ENCODE measurements at regions of chr9 and their contacts with region 1.

Region 1: DNA sequence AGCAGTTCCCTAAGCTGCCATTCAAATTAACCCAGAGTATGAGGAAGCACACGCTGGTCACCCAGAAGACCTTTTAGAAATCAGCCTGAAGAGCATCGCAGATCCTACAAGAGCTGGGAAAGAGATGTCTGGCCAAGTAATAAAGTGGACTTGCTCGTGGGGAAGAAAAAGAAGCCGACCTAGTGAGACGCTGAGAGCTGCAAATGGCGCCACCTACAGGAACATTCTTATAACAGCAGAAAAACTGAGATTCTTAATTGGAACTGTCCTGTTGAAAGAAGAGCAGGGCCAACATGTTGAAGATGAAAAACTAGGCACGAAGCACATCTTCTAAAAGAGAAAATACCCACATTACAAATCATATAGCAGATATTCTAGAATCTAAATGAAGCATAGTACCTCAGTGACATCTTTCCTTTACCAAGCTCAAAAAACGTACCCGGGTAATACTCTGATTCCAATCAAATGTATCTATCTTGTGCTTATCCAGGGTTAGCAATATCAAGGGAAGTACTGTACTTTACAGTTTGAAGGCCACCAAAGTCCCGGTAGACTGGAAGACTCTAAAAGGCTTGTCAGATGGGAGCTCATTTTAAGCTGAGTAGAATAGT is 3.9 kb upstream of the GNAQ start:
- DNase-seq: peak; percentile 61 to 75 (median 72)
- H3K4me3 ChIP-seq: no peak overlapping the region
- H3K4me3 Mint-ChIP-seq: peak overlapping the region in 4 of 8 donors; percentile 20 to 62 (median 34)
- H3K27ac ChIP-seq: no peak overlapping the region
- H3K27ac Mint-ChIP-seq: peak overlapping the region; percentile 6 to 91 (median 70)
- H3K4me1 ChIP-seq: peaks cover 34% of the 10 kb centered on the region
- H3K4me1 Mint-ChIP-seq: peaks cover 28 to 39% (median 33%) of the 10 kb centered on the region in 4 donors
- H3K27me3 ChIP-seq: no peaks in the 10 kb centered on the region
- H3K27me3 Mint-ChIP-seq: no peaks in the 10 kb centered on the region

Region 2: GRCh38 chr9:77663754-77664153 is 371.7 kb before region 1 on chr9:
- CTCF ChIA-PET with region 1: no interaction called
- POLR2A ChIA-PET with region 1: no interaction called
- intact Hi-C with region 1: loop called (anchors 10 kb)
- DNase-seq: no peak
- H3K4me3 ChIP-seq: no peak overlapping the region
- H3K4me3 Mint-ChIP-seq: no peak overlapping the region
- H3K27ac ChIP-seq: no peak overlapping the region
- H3K27ac Mint-ChIP-seq: no peak overlapping the region
- H3K4me1 ChIP-seq: no peaks in the 10 kb centered on the region
- H3K4me1 Mint-ChIP-seq: no peaks in the 10 kb centered on the region
- H3K27me3 ChIP-seq: no peaks in the 10 kb centered on the region
- H3K27me3 Mint-ChIP-seq: peaks cover 3 to 5% of the 10 kb centered on the region in 2 donors

Region 3: GRCh38 chr9:77949751-77950436 is 85.6 kb before region 1 on chr9:
- CTCF ChIA-PET with region 1: interaction called, 13 read pairs
- POLR2A ChIA-PET with region 1: no interaction called
- intact Hi-C with region 1: no loop called
- DNase-seq: no peak
- H3K4me3 ChIP-seq: no peak overlapping the region
- H3K4me3 Mint-ChIP-seq: peak overlapping the region in 1 of 8 donors; percentile 10
- H3K27ac ChIP-seq: no peak overlapping the region
- H3K27ac Mint-ChIP-seq: peak overlapping the region in 5 of 7 donors; percentile 13 to 80 (median 33)
- H3K4me1 ChIP-seq: peaks cover 51% of the 10 kb centered on the region
- H3K4me1 Mint-ChIP-seq: peaks cover 58 to 83% (median 67%) of the 10 kb centered on the region in 4 donors
- H3K27me3 ChIP-seq: no peaks in the 10 kb centered on the region
- H3K27me3 Mint-ChIP-seq: no peaks in the 10 kb centered on the region

Region 4: GRCh38 chr9:78004478-78005229 is 30.8 kb before region 1 on chr9:
- CTCF ChIA-PET with region 1: interaction called, 21 read pairs
- POLR2A ChIA-PET with region 1: interaction called, 5 read pairs
- intact Hi-C with region 1: loop called (anchors 2 kb)
- DNase-seq: peak in 2 of 5 donors; percentile 9 to 17
- H3K4me3 ChIP-seq: no peak overlapping the region
- H3K4me3 Mint-ChIP-seq: peak overlapping the region in 2 of 8 donors; percentile 4 to 22
- H3K27ac ChIP-seq: no peak overlapping the region
- H3K27ac Mint-ChIP-seq: peak overlapping the region in 3 of 7 donors; percentile 2 to 72 (median 7)
- H3K4me1 ChIP-seq: peaks cover 43% of the 10 kb centered on the region
- H3K4me1 Mint-ChIP-seq: peaks cover 36 to 80% (median 60%) of the 10 kb centered on the region in 4 donors
- H3K27me3 ChIP-seq: no peaks in the 10 kb centered on the region
- H3K27me3 Mint-ChIP-seq: no peaks in the 10 kb centered on the region

Region 5: GRCh38 chr9:78062710-78063109 is 27.2 kb after region 1 on chr9:
- CTCF ChIA-PET with region 1: interaction called, 13 read pairs
- POLR2A ChIA-PET with region 1: interaction called, 3 read pairs
- intact Hi-C with region 1: no loop called
- DNase-seq: no peak
- H3K4me3 ChIP-seq: no peak overlapping the region
- H3K4me3 Mint-ChIP-seq: no peak overlapping the region
- H3K27ac ChIP-seq: no peak overlapping the region
- H3K27ac Mint-ChIP-seq: no peak overlapping the region
- H3K4me1 ChIP-seq: no peaks in the 10 kb centered on the region
- H3K4me1 Mint-ChIP-seq: peaks cover 0 to 17% (median 8%) of the 10 kb centered on the region in 4 donors
- H3K27me3 ChIP-seq: no peaks in the 10 kb centered on the region
- H3K27me3 Mint-ChIP-seq: no peaks in the 10 kb centered on the region

Region 6: DNA sequence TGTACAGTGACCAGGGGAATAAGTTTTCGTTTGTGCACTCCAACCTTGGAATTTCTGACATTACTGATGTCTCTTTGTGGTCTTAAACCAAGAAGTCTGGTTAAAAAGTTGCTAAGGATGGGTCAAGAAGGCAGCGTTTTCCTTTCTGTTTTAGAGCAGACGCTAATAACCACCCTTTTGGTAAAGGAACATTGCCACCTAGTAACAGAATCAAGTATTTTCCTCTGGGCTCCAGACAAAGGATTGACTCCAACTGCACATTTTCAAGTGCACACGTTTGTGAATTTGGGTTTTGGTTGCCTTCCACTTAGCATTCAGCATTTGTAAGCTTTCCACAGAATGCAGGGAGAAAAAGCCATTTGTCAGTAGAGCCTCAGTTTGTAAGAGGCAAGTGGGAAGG is 178.2 kb after region 1 on chr9:
- CTCF ChIA-PET with region 1: interaction called, 9 read pairs
- POLR2A ChIA-PET with region 1: interaction called, 14 read pairs
- intact Hi-C with region 1: loop called (anchors 1 kb)
- DNase-seq: peak in 4 of 5 donors; percentile 29 to 44 (median 38)
- H3K4me3 ChIP-seq: no peak overlapping the region
- H3K4me3 Mint-ChIP-seq: peak overlapping the region in 4 of 8 donors; percentile 21 to 56 (median 44)
- H3K27ac ChIP-seq: no peak overlapping the region
- H3K27ac Mint-ChIP-seq: peak overlapping the region in 3 of 7 donors; percentile 30 to 65 (median 44)
- H3K4me1 ChIP-seq: peaks cover 37% of the 10 kb centered on the region
- H3K4me1 Mint-ChIP-seq: peaks cover 32 to 47% (median 37%) of the 10 kb centered on the region in 4 donors
- H3K27me3 ChIP-seq: no peaks in the 10 kb centered on the region
- H3K27me3 Mint-ChIP-seq: no peaks in the 10 kb centered on the region

Measured in CD4-positive, alpha-beta memory T cell (primary cell).